ENCODE measurements at regions of chr2 and their contacts with region 1.

Region 1: DNA sequence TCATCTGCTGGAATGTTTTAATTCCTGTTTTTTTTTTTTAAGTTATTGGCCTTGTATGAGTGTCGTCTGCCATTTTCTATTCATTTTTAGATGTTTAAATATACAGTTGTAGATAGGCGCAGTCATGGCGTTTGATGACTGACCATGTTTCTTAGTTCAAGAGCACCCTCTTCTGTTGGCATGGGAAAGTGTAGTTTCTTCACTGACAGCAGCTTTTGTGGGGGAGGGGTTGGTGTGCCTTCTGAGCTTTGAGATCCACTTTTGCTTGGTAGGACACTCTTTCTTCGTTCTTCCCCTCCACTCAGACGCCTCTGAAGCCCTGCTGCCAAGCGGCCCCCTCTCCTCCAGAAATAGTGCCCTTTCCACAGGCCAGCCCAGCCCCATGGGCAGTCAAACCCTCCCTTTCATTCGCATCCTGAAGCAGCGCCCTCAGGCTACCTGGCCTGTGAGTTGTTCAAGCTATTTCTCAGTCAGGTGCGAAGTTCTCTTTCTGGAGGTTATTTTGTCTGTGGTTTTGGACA is 492.0 kb downstream of the TNS1 start:
- DNase-seq: peak; percentile 74
- ATAC-seq: peak; percentile 93
- H3K4me3 Mint-ChIP-seq: no peak overlapping the region
- H3K27ac Mint-ChIP-seq: no peak overlapping the region
- H3K4me1 Mint-ChIP-seq: peaks cover 2% of the 10 kb centered on the region
- H3K27me3 Mint-ChIP-seq: peaks cover 10% of the 10 kb centered on the region

Region 2: DNA sequence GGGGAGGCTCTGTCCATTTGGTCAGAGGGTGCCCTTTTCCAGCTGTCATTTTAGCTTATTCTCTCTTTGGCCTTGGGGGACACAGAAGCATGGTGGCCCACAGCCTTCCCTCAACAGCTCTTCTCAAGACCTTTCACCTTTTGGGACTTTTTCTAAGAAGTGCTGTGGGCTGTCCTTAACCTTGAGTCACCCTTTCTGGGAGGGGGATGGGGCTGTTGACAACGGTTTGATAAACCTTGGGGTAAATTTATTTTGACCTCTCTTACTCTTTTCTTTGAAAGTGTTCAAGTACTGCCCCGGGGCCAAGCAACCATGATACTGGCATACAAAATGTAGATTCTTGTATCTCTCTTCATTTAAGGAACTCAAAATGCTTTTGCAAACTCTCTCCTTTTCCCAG is 829.1 kb before region 1 on chr2:
- CTCF ChIA-PET with region 1: interaction called, 5 read pairs
- POLR2A ChIA-PET with region 1: no interaction called
- intact Hi-C with region 1: loop called (anchors 1 kb)
- DNase-seq: no peak
- ATAC-seq: no peak
- H3K4me3 Mint-ChIP-seq: no peak overlapping the region
- H3K27ac Mint-ChIP-seq: no peak overlapping the region
- H3K4me1 Mint-ChIP-seq: peaks cover 8% of the 10 kb centered on the region
- H3K27me3 Mint-ChIP-seq: peaks cover 13% of the 10 kb centered on the region

Region 3: DNA sequence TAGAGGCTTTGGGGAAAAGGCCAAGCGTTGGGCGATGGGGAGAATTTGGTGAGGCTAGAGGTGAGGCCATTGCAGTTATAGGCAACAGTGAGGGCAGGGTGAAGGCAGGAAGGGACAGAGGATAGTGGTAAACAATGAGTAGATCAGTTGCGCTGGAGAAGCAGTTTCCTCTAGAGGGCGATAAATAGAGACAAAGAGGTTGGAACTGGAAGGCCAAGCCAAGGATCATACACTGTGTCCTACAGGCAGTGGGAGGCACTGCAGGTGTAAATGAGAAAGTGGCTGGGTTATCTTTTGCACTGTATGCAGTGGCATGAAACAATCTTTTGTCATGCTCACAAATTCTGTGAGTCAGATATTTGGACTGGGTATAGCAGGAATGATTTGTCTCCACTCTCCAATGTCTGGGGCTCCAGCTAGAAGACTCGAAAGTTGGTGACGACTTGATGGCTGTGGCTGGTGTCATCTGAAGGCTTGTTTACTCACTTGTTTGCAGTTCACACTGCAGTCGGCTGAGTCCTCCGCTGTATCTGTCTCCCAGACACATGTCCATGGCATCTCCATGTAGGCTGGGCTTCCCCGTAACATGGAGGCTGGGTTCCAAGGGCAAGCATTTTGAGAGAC is 733.1 kb before region 1 on chr2:
- CTCF ChIA-PET with region 1: no interaction called
- POLR2A ChIA-PET with region 1: no interaction called
- intact Hi-C with region 1: loop called in 1 of 2 experiments (anchors 1 kb)
- DNase-seq: peak; percentile 64
- ATAC-seq: peak; percentile 97
- H3K4me3 Mint-ChIP-seq: no peak overlapping the region
- H3K27ac Mint-ChIP-seq: no peak overlapping the region
- H3K4me1 Mint-ChIP-seq: no peaks in the 10 kb centered on the region
- H3K27me3 Mint-ChIP-seq: peaks cover 6% of the 10 kb centered on the region

Region 4: DNA sequence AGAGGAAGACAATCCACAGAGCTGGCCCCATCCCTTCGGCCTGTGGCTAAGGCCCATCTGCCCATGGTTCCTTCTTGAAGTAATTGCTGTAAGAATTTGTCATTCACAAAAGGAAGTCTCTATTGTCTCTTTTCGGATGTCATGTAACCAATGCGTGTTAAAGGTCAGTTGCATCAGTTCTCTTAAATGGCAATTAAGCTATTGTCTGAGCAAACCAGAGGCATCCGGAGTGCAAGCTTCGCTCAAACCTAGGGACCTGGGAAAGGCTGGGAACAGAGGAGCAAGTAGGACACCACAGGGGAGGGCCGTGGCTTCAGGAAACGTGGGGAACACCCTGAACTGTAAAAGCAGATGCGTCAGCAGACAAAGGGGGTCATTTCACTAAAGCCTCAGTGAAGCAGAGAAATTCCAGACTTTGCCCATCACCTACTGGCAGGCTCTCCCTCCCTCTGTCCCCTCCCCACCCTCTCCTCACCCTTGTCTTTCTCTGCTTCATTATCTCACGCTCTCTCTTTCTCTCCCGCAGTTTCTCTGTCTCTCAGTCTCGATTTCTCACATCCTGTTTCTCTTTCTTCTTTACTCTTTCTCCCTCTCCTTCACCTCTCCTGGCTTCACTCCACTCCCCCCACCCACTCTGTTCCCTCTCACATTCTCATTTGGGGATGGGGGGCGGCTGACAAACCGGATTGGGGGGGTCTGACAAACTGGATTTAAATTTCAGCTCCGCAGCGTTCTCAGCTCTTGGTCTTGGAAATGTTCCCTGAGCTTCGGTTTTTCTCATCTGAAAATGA is 446.4 kb before region 1 on chr2:
- CTCF ChIA-PET with region 1: no interaction called
- POLR2A ChIA-PET with region 1: no interaction called
- intact Hi-C with region 1: loop called in 1 of 2 experiments (anchors 10 kb)
- DNase-seq: no peak
- ATAC-seq: no peak
- H3K4me3 Mint-ChIP-seq: no peak overlapping the region
- H3K27ac Mint-ChIP-seq: no peak overlapping the region
- H3K4me1 Mint-ChIP-seq: peaks cover 3% of the 10 kb centered on the region
- H3K27me3 Mint-ChIP-seq: peaks cover 6% of the 10 kb centered on the region

Region 5: DNA sequence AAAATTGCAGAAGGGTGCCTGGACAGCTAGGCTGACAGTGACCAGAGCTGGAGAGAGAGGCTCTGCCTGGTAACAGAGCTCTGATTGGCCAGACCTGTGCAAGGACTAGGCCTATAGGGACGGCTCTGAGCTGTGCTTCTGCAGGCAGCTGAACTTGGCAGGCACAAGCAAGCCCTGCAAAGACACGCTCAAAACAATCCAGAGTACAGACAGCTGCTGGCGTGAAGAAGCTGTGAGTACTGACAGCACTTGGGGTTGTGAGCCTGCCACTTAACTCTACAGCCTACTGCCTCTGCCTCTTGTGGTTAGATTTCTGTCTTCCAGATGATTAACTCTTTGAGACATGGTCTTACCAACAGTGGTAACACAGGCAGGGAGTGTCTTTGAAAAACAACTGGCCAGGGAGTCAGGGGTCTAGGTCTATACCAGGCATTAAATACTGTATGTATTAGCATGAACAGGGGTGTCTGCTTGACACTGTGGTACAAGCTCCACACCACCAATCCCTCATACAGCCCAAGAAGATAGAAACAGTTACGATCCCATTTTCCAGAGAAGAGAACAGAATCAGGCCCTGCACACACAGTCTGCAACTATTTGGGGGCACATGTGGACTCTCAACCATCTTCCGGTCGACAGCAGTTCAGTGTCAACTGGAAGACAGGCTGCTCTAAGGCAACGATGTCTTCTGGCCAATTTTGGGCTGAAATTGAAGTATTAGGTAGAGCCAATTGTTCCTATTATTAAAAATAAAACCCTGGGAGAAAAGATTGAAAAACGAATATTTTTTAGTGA is 76.5 kb before region 1 on chr2:
- CTCF ChIA-PET with region 1: no interaction called
- POLR2A ChIA-PET with region 1: no interaction called
- intact Hi-C with region 1: no loop called
- DNase-seq: peak; percentile 49
- ATAC-seq: peak; percentile 94
- H3K4me3 Mint-ChIP-seq: no peak overlapping the region
- H3K27ac Mint-ChIP-seq: no peak overlapping the region
- H3K4me1 Mint-ChIP-seq: peaks cover 12% of the 10 kb centered on the region
- H3K27me3 Mint-ChIP-seq: no peaks in the 10 kb centered on the region

Region 6: GRCh38 chr2:217713395-217714286 is 202.8 kb after region 1 on chr2:
- CTCF ChIA-PET with region 1: interaction called, 5 read pairs
- POLR2A ChIA-PET with region 1: no interaction called
- intact Hi-C with region 1: loop called (anchors 1 to 2 kb)
- DNase-seq: peak; percentile 86
- ATAC-seq: peak; percentile 78
- H3K4me3 Mint-ChIP-seq: no peak overlapping the region
- H3K27ac Mint-ChIP-seq: no peak overlapping the region
- H3K4me1 Mint-ChIP-seq: no peaks in the 10 kb centered on the region
- H3K27me3 Mint-ChIP-seq: peaks cover 2% of the 10 kb centered on the region

Measured in activated CD4-positive, alpha-beta T cell treated with anti-CD3 and anti-CD28 coated beads for 36 hours (primary cell).